ENCODE measurements at regions of chr7 and their contacts with region 1.

Region 1: DNA sequence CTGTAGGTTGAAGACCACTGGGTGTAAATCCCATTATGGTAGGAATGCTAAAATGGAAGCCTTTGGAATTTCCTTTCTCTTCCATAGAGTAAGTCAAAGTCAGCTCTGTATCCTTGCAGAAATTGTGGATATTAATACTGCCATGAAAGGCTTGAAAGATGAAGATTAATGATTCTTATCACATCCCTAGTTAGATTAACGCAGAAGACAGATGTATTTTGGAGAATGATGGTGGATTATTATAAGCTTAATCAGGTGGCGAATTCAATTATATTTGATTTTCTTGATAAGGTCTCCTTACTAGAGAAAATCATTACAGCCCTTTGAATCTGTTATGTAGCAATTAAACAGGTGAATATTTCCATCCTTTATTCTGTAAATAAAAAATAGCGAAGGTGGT is 270.1 kb downstream of the PHF14 start:
- DNase-seq: no peak
- ATAC-seq: no peak
- H3K4me3 ChIP-seq: no peak overlapping the region
- H3K27ac ChIP-seq: no peak overlapping the region
- H3K4me1 ChIP-seq: no peaks in the 10 kb centered on the region
- H3K27me3 ChIP-seq: no peaks in the 10 kb centered on the region
- CTCF ChIP-seq: no peak
- POLR2A ChIP-seq: no peak
- RAD21 ChIP-seq: no peak

Region 2: DNA sequence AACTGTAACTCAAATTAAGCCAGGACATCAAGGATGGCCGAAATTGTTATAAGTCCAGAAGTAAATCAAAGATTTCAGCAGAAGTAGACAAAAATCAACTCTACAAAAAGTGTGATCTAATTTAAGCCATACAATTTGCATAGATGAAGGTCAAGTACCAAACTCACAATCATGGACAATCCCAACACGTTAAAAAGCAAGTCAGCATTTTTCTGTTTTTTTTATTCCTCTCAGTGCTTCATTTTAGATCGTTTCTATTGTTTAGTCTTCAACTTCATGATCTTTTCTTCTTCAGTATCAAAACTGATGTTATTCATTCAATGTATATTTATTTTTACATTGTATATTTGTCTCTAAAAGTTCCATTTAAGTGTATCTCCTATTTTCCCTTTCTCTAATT is 944.4 kb before region 1 on chr7:
- CTCF ChIA-PET with region 1: interaction called, 10 read pairs
- POLR2A ChIA-PET with region 1: no interaction called
- dilution Hi-C with region 1: no loop called
- in situ Hi-C with region 1: no loop called
- intact Hi-C with region 1: no loop called
- DNase-seq: no peak
- ATAC-seq: no peak
- H3K4me3 ChIP-seq: no peak overlapping the region
- H3K27ac ChIP-seq: no peak overlapping the region
- H3K4me1 ChIP-seq: no peaks in the 10 kb centered on the region
- H3K27me3 ChIP-seq: no peaks in the 10 kb centered on the region
- CTCF ChIP-seq: no peak
- POLR2A ChIP-seq: no peak
- RAD21 ChIP-seq: no peak

Region 3: GRCh38 chr7:10720047-10720446 is 523.7 kb before region 1 on chr7:
- CTCF ChIA-PET with region 1: no interaction called
- POLR2A ChIA-PET with region 1: no interaction called
- dilution Hi-C with region 1: no loop called
- in situ Hi-C with region 1: no loop called
- intact Hi-C with region 1: no loop called
- DNase-seq: no peak
- ATAC-seq: no peak
- H3K4me3 ChIP-seq: no peak overlapping the region
- H3K27ac ChIP-seq: no peak overlapping the region
- H3K4me1 ChIP-seq: no peaks in the 10 kb centered on the region
- H3K27me3 ChIP-seq: no peaks in the 10 kb centered on the region
- CTCF ChIP-seq: no peak
- POLR2A ChIP-seq: no peak
- RAD21 ChIP-seq: no peak